ENCODE measurements at regions of chr19 and their contacts with region 1.

Region 1: DNA sequence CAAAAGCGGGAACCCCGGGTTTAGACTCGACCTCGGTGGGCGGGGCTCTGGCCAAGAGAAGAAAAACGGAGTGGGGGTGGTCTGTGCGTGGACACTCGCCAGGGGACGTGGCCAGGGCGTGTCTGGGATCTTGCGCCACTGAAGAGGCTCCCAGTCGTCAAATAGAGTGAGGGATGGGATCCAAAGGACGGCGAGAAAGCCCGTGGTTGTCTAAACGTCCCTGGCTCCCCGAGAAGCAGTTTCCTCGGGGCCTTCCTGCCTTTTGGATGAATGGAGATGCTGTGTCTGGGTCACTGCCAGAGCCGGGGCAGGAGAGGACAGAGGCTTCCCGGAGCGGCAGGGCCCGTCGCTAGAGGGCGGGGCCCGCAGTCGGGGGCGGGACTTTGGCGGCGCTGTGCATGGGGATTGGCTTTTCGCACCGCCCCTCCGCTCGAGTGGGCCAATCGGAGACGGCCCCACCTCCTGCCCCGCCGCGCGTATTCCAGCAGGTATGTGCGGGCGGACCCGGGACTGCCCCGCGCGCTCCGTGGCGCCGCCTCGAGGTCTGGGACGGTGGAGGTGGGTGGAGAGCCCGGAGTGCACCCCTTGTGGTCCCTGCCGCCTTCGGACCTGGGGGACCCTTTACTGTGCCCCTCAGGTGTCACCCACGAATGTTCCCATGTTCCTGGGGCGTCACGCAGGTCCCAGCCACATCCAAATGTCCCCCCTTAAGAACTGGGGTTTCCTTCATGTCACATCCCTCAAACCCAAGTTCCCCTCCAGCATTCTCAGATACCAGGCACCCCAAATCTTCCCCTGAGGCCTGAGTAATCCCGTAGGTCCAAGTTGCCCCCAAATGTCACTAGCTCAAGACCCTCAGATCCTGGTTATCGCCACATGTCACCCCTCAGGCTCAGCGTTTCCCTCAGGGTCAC is 38.3 kb downstream of the ZSWIM4 start:
- DNase-seq: peak; percentile 98
- H3K4me3 Mint-ChIP-seq: peak overlapping the region; percentile 86
- H3K27ac Mint-ChIP-seq: peak overlapping the region; percentile 88
- H3K4me1 Mint-ChIP-seq: peaks cover 30% of the 10 kb centered on the region
- H3K27me3 Mint-ChIP-seq: no peaks in the 10 kb centered on the region

Region 2: GRCh38 chr19:13846557-13847406 is 13.2 kb after region 1 on chr19:
- intact Hi-C with region 1: loop called (anchors 2 kb)
- DNase-seq: peak; percentile 99
- H3K4me3 Mint-ChIP-seq: peak overlapping the region; percentile 87
- H3K27ac Mint-ChIP-seq: peak overlapping the region; percentile 99
- H3K4me1 Mint-ChIP-seq: peaks cover 46% of the 10 kb centered on the region
- H3K27me3 Mint-ChIP-seq: no peaks in the 10 kb centered on the region

Region 3: DNA sequence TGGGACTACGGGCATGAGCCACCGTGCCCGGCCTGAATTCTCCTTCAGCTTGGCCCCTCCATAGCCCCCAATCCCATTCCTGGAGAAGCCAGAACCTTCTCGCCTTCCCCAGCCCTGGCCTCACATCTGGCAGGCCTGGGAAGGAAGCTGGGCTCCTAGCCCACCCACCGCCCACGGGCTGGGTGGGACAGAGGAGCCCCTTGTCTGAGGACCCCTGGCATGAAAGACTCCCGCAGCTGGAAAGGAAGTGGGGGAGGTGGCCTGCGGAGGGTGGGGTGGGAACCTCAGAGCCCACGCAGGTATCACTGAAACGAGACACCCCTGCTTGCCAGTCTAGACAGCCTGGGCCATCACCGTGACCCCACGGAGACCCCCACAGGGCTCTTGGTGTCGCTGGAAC is 35.7 kb after region 1 on chr19:
- intact Hi-C with region 1: no loop called
- DNase-seq: no peak
- H3K4me3 Mint-ChIP-seq: no peak overlapping the region
- H3K27ac Mint-ChIP-seq: no peak overlapping the region
- H3K4me1 Mint-ChIP-seq: peaks cover 18% of the 10 kb centered on the region
- H3K27me3 Mint-ChIP-seq: peaks cover 29% of the 10 kb centered on the region

Measured in activated CD4-positive, alpha-beta T cell treated with anti-CD3 and anti-CD28 coated beads, Interleukin-2, amount 10 ng/mL, durations not matched to agents 24 days and 14 days (primary cell).